ENCODE measurements at regions of chr19 and their contacts with region 1.

Region 1: DNA sequence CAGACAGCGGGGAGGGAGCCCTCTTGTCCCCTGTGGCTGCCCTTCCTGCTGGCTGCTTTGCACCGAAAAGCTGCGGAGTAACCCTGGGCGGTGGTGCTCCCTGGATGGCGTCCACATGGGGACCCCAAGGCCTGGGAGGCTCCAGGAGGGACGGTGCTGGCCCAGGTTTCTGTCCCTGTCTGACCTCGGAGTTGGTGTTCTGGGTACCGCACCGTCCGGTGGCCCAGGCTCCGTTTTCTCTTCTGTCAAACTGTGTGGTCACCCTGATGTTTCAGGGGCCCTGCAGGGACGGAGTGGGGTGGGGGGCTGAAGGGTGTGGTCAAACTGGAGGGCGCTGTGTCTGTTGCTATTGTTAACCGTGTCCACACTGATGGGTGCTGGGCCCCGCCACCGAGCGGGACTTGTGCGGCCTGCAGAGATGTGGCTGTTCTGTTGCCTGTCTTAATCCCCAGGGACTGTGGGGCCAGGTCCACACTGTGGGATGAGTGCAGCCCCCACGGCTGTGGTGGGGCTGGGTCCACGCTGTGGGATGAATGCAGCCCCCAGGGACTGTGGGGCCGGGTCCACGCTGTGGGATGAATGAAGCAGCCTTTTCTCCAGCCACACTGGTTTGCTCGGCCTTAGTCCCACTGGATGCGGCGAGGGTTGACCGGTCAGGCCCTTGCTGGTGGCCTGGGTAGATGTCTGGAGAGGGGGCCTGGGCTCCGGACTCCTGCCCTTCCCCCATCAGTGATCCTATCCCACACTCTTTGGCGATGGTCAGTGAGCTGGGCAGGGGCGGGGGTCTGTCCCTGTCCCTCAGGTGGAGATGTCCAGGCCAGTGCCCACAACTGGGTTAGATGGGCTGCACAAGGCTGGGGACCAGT is 6.9 kb downstream of the GNA11 start:
- DNase-seq: no peak
- H3K4me3 ChIP-seq: no peak overlapping the region
- H3K27me3 ChIP-seq: no peaks in the 10 kb centered on the region
- CTCF ChIP-seq: no peak

Region 2: GRCh38 chr19:3084943-3085342 is 16.2 kb before region 1 on chr19:
- CTCF ChIA-PET with region 1: interaction called, 5 read pairs
- POLR2A ChIA-PET with region 1: interaction called, 11 read pairs
- DNase-seq: no peak
- H3K4me3 ChIP-seq: no peak overlapping the region
- H3K27me3 ChIP-seq: no peaks in the 10 kb centered on the region
- CTCF ChIP-seq: no peak